HepG2 (cell line): ENCODE measurements at regions of chr16 and their contacts with region 1.

Region 1: GRCh38 chr16:77584205-77584859 is 138.0 kb upstream of the NUDT7 start:
- DNase-seq: peak; percentile 44
- ATAC-seq: peak; percentile 77
- H3K4me3 ChIP-seq: no peak overlapping the region
- H3K27ac ChIP-seq: no peak overlapping the region
- H3K4me1 ChIP-seq: no peaks in the 10 kb centered on the region
- H3K27me3 ChIP-seq: peaks cover 2 to 8% of the 10 kb centered on the region in 2 experiments; a peak in 2 of 5 replicates
- CTCF ChIP-seq: peak; percentile 84
- EP300 ChIP-seq: no peak
- POLR2A ChIP-seq: no peak
- RAD21 ChIP-seq: peak; percentile 89

Region 2: DNA sequence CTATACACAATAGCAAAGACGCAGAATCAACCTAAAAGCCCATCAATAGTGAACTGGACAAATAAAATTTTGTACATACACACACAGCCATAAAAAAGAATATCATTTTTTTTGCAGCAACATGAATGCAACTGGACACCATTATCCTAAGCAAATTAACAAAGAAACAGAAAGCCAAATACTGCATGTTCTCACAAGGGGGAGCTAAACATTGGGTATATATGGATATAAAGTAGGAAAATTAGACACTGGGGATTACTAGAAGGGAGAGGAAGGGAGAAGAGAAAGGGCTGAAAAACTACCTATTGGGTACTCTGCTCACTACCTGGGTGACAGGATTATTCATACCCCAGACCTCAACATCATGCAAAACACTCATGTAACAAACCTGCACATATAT is 177.7 kb before region 1 on chr16:
- CTCF ChIA-PET with region 1: interaction called, 10 read pairs
- POLR2A ChIA-PET with region 1: no interaction called
- in situ Hi-C with region 1: no loop called
- intact Hi-C with region 1: loop called (anchors 1 kb)
- DNase-seq: peak; percentile 15
- ATAC-seq: peak; percentile 40; the same call in 1 of the 3 replicates
- H3K4me3 ChIP-seq: no peak overlapping the region
- H3K27ac ChIP-seq: no peak overlapping the region
- H3K4me1 ChIP-seq: no peaks in the 10 kb centered on the region
- H3K27me3 ChIP-seq: no peaks in the 10 kb centered on the region
- CTCF ChIP-seq: peak; percentile 28
- EP300 ChIP-seq: no peak
- POLR2A ChIP-seq: no peak
- RAD21 ChIP-seq: peak; percentile 13; the same call in 1 of the 2 replicates

Region 3: GRCh38 chr16:77437859-77438258 is 146.5 kb before region 1 on chr16:
- CTCF ChIA-PET with region 1: no interaction called
- POLR2A ChIA-PET with region 1: no interaction called
- in situ Hi-C with region 1: no loop called
- intact Hi-C with region 1: loop called (anchors 1 kb)
- DNase-seq: no peak
- ATAC-seq: no peak
- H3K4me3 ChIP-seq: no peak overlapping the region
- H3K27ac ChIP-seq: no peak overlapping the region
- H3K4me1 ChIP-seq: no peaks in the 10 kb centered on the region
- H3K27me3 ChIP-seq: peaks cover 5 to 37% of the 10 kb centered on the region in 2 experiments; a peak in 4 of 5 replicates
- CTCF ChIP-seq: 0 out of 2 replicates have a peak, but pooled peaks have one; percentile 9
- EP300 ChIP-seq: no peak
- POLR2A ChIP-seq: no peak
- RAD21 ChIP-seq: no peak

Region 4: GRCh38 chr16:77668201-77668600 is 83.9 kb after region 1 on chr16:
- CTCF ChIA-PET with region 1: no interaction called
- POLR2A ChIA-PET with region 1: no interaction called
- in situ Hi-C with region 1: no loop called
- intact Hi-C with region 1: no loop called
- DNase-seq: no peak
- ATAC-seq: no peak
- H3K4me3 ChIP-seq: no peak overlapping the region
- H3K27ac ChIP-seq: no peak overlapping the region
- H3K4me1 ChIP-seq: no peaks in the 10 kb centered on the region
- H3K27me3 ChIP-seq: no peaks in the 10 kb centered on the region; a peak in 1 of 5 replicates
- CTCF ChIP-seq: no peak
- EP300 ChIP-seq: no peak
- POLR2A ChIP-seq: no peak
- RAD21 ChIP-seq: no peak